ENCODE measurements at regions of chr20 and their contacts with region 1.

Region 1: DNA sequence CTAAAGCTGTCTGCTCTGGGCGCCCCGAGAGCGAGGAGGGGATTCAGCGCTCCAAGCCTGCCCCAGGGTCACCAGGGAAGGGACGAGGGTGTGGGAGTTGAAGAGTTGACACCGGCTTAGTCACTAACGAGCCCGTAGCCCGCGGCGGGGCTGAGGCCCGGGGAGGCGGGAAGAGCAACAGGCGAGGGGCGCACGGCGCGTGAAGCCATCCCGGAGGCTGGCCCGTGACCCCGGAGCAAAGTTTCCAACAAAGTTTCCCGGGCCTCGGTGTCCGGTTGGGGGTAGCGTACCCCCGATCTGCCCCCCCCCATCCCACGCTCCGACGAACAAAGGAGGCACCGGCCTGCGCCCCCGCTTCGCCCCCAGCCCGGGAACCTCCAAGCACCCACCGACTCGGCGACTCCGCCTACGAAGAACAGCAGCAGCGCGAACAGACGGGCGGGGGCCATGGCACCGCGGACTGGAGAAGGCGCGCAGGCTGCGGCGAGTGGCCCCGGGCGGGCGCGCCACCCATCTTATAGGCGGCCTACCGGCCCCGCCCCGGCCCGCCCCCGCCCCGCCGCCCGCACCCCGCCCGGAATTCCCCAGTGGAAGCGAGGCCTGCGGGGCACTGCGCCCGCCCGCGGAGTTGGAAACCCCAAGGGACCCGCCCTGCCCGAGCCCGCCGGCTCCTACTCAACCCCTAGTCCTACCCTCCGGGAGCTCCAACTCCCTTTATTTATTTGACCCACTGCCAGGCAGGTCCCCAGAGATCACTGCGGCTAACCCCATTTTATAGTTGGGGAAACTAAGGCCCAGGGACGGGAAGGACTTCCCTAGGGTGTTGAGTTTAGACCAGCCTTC is at the start of gene SDC4:
- DNase-seq: peak; percentile 44
- H3K4me3 ChIP-seq: peak within 1 kb of the TSS; percentile 50 to 85 (median 69)
- H3K27ac ChIP-seq: peak within 1 kb of the TSS; percentile 62
- H3K4me1 ChIP-seq: peaks cover 49% of the 10 kb centered on the region
- H3K27me3 ChIP-seq: no peaks in the 10 kb centered on the region
- CTCF ChIP-seq: no peak
- POLR2A ChIP-seq: peak; percentile 99
- total RNA-seq, gene SDC4: 28.7 and 32.0 TPM in 2 replicates

Region 2: GRCh38 chr20:45337367-45338120 is 10.6 kb before region 1 on chr20:
- CTCF ChIA-PET with region 1: interaction called, 7 read pairs
- POLR2A ChIA-PET with region 1: interaction called, 10 read pairs
- dilution Hi-C with region 1: no loop called
- intact Hi-C with region 1: no loop called
- DNase-seq: no peak
- H3K4me3 ChIP-seq: no peak overlapping the region
- H3K27ac ChIP-seq: peak overlapping the region; percentile 12
- H3K4me1 ChIP-seq: peaks cover 27% of the 10 kb centered on the region
- H3K27me3 ChIP-seq: no peaks in the 10 kb centered on the region
- CTCF ChIP-seq: no peak
- POLR2A ChIP-seq: no peak

Region 3: DNA sequence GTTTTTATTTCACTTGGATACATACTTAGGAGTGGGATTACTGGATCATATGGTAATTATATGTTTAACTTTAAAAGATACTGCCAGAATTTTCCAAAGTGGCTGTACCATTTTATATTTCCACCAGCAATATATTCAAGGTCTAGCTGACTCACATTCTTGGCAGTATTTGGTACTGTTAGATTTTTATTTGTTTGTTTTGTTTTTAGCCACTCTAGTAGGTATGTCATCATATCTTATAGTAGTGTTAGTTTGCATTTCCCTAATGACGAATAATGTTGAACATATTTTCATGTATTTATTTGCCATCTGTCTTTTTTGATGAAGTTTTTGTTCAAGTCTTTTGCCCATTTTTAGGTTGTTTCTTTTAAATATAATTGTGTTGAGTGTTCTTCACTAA is 35.0 kb after region 1 on chr20:
- CTCF ChIA-PET with region 1: no interaction called
- POLR2A ChIA-PET with region 1: no interaction called
- dilution Hi-C with region 1: no loop called
- intact Hi-C with region 1: no loop called
- DNase-seq: no peak
- H3K4me3 ChIP-seq: no peak overlapping the region
- H3K27ac ChIP-seq: no peak overlapping the region
- H3K4me1 ChIP-seq: no peaks in the 10 kb centered on the region
- H3K27me3 ChIP-seq: no peaks in the 10 kb centered on the region
- CTCF ChIP-seq: no peak
- POLR2A ChIP-seq: no peak

Region 4: DNA sequence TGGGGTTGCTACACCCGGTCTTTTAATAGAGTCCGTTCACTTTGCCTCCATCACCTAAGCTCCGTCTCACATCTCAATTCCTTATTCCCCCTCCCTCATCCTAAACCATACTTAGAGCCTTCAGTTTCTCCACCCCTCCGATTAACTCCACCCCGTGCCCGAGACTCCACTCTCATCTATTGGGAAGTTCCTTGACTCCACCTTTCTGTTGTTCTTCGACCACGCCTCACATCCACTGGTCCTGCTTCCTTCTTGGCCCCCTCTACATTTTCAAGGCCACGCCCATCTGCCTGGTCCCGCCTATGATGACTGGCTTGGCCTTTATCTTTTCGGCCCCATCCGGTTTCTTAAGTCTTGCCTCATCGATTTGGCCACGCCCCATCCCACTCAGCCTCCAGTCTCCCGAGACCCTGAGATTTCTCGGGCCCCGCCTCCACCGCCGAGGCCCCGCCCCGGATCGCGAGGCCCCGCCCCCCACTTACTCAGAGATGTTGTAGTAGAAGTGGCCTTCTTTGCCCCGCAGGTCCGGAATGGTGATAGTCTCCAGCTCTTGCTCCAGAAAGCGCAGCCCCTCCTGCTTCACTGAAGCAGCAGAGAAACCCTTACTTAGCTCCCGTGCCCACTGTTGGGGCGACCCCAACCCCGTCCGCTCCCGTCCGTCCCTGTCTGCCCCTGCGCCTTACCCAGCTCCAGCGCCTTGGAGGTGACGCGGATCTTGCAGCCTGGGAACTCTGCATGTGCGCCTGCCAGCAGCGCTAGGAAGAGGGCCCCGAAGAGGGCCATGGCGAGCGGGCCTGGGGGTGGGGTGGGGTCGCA is 562.7 kb after region 1 on chr20:
- CTCF ChIA-PET with region 1: no interaction called
- POLR2A ChIA-PET with region 1: no interaction called
- dilution Hi-C with region 1: no loop called
- intact Hi-C with region 1: loop called (anchors 10 kb)
- DNase-seq: peak; percentile 100
- H3K4me3 ChIP-seq: peak overlapping the region; percentile 6 to 62 (median 37)
- H3K27ac ChIP-seq: peak overlapping the region; percentile 43
- H3K4me1 ChIP-seq: peaks cover 28% of the 10 kb centered on the region
- H3K27me3 ChIP-seq: no peaks in the 10 kb centered on the region
- CTCF ChIP-seq: no peak
- POLR2A ChIP-seq: peak; percentile 30

Region 5: GRCh38 chr20:47231382-47232039 is 1883.4 kb after region 1 on chr20:
- CTCF ChIA-PET with region 1: no interaction called
- POLR2A ChIA-PET with region 1: no interaction called
- dilution Hi-C with region 1: no loop called
- intact Hi-C with region 1: no loop called
- DNase-seq: no peak
- H3K4me3 ChIP-seq: no peak overlapping the region
- H3K27ac ChIP-seq: no peak overlapping the region
- H3K4me1 ChIP-seq: no peaks in the 10 kb centered on the region
- H3K27me3 ChIP-seq: no peaks in the 10 kb centered on the region
- CTCF ChIP-seq: no peak
- POLR2A ChIP-seq: no peak